ENCODE measurements at regions of chr9 and their contacts with region 1.

Region 1: GRCh38 chr9:127004946-127005769 is 90.6 kb downstream of the RALGPS1 start:
- DNase-seq: peak; percentile 87
- ATAC-seq: peak; percentile 98
- H3K4me3 Mint-ChIP-seq: no peak overlapping the region
- H3K27ac Mint-ChIP-seq: no peak overlapping the region
- H3K4me1 Mint-ChIP-seq: peaks cover 24% of the 10 kb centered on the region
- H3K27me3 Mint-ChIP-seq: peaks cover 45% of the 10 kb centered on the region

Region 2: DNA sequence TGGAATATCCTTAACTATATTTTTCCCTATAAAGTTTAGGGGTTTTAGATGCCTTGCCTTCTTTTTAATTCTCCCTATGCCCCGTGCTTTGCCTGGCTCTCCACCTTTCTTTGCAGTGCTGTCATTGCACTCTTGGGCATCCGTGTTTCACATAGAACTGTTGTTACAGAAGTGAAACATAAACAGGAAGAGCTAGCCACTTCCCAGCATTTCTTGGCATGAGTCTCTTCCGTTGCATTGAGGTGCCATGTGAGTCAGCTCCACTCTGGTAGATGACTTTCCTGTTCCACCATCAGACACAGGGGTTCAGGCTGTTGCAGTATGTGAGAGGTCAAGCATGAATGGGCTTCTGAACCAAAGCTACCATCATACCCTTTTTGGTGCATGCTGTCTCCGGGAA is 43.9 kb after region 1 on chr9:
- CTCF ChIA-PET with region 1: no interaction called
- POLR2A ChIA-PET with region 1: no interaction called
- intact Hi-C with region 1: loop called (anchors 1 kb)
- DNase-seq: peak; percentile 59
- ATAC-seq: peak; percentile 96
- H3K4me3 Mint-ChIP-seq: no peak overlapping the region
- H3K27ac Mint-ChIP-seq: no peak overlapping the region
- H3K4me1 Mint-ChIP-seq: peaks cover 21% of the 10 kb centered on the region
- H3K27me3 Mint-ChIP-seq: peaks cover 2% of the 10 kb centered on the region

Region 3: DNA sequence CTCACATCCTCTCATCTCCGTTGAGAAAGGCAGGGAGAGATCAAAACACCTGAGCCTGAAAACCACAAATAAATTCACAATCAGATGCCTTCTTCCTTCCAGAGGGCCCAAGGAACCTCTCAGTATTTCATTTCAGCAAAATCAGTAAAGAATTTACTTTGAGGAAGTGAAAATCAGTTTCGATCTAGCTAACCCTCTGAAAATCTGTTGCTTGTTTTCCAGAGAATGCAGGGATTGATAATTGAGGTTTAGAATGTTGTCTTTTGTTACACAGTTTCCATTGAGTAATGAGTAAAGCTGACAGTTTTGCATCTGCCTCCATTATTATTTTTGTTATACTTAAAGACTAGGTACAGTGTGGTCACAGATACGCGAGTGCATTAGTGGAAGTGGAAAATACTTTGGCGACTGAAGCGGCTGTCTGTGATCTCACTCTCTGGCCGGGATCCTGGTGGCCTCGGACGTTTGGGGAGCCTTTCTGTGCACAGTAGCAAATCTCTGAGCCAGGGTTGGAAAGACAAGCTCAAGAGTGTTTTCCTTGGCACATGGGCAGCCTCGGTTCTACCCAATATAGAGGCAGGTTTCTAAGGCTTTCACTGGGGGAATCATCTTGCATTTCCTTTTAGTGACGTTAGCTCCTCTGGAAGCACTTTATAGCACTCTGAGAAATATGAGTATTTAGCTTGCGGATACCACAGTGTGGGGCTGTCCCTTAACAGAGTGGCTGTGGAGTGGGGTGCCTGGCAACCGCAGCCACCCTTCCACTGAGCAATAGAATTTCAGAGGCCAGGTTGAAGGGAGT is 149.4 kb after region 1 on chr9:
- CTCF ChIA-PET with region 1: no interaction called
- POLR2A ChIA-PET with region 1: no interaction called
- intact Hi-C with region 1: loop called in 1 of 2 experiments (anchors 1 kb)
- DNase-seq: peak; percentile 50
- ATAC-seq: peak; percentile 80
- H3K4me3 Mint-ChIP-seq: no peak overlapping the region
- H3K27ac Mint-ChIP-seq: peak overlapping the region; percentile 9
- H3K4me1 Mint-ChIP-seq: peaks cover 14% of the 10 kb centered on the region
- H3K27me3 Mint-ChIP-seq: peaks cover 8% of the 10 kb centered on the region

Region 4: GRCh38 chr9:127388037-127388855 is 383.1 kb after region 1 on chr9:
- CTCF ChIA-PET with region 1: no interaction called
- POLR2A ChIA-PET with region 1: no interaction called
- intact Hi-C with region 1: loop called in 1 of 2 experiments (anchors 5 kb)
- DNase-seq: peak; percentile 94
- ATAC-seq: peak; percentile 97
- H3K4me3 Mint-ChIP-seq: peak overlapping the region; percentile 3
- H3K27ac Mint-ChIP-seq: peak overlapping the region; percentile 81
- H3K4me1 Mint-ChIP-seq: peaks cover 20% of the 10 kb centered on the region
- H3K27me3 Mint-ChIP-seq: peaks cover 68% of the 10 kb centered on the region

Measured in activated CD4-positive, alpha-beta T cell treated with anti-CD3 and anti-CD28 coated beads for 36 hours (primary cell).